ENCODE measurements at regions of chr1 and their contacts with region 1.

Region 1: DNA sequence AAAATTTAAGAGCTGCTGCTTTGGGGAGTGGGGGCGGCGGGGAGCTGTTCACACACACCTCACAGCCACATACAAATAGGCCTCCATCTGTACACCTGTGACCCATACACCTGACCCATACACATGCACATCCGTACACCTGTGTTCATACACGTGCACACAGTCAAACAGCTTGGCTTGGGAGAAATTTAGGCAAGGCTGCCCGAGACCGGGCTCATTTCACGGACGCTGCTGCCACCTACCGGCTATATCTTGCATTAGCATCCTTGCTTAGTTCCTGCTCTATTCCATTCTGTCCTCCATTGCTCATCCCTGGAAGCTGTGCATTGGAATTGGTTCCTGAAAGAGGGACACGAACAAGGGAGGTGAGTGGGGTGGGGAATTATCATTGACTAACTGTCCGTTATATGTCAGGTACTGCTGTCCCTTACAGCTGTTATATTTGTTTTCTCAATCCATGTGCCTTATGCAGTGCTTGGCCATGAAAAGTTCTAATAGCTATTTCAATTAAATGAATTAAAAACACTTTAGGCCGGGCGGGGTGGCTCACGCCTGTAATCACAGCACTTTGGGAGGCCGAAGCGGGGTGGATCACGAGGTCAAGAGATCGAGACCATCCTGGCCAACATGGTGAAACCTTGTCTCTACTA is 37.1 kb upstream of the EPB41 start:
- DNase-seq: peak; percentile 88
- H3K4me3 Mint-ChIP-seq: no peak overlapping the region
- H3K27ac Mint-ChIP-seq: no peak overlapping the region
- H3K4me1 Mint-ChIP-seq: peaks cover 9% of the 10 kb centered on the region
- H3K27me3 Mint-ChIP-seq: no peaks in the 10 kb centered on the region

Region 2: DNA sequence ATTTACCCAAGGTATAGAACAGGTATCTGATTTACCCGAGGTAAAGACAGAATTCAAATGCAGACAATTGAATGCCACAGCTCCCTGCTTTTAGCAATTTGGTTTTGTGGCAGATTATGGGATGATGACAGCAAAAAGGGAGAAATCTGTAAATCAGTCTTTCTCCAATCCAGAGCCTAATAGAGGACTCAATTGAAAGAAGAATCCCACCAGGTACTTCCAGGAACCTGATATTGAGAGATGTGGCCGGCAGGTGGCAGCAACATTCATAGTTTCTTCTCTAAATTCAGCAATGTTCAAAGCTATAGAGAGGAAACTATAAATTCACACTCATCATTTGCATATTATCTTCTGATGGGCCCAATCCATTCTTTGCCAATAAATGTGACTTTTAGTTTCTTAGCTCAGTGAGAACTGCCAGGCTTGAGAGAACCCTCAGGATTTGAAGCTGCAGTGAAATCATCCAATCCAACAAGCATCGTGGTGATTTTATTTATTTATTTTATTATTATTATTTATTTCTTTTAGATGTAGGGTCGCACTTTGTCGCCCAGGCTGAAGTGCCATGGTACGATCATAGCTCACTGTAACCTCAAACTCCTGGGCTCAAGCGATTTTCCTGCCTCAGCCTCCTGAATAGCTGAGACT is 517.5 kb before region 1 on chr1:
- CTCF ChIA-PET with region 1: interaction called, 23 read pairs
- intact Hi-C with region 1: loop called (anchors 1 kb)
- DNase-seq: peak; percentile 90
- H3K4me3 Mint-ChIP-seq: no peak overlapping the region
- H3K27ac Mint-ChIP-seq: no peak overlapping the region
- H3K4me1 Mint-ChIP-seq: peaks cover 2% of the 10 kb centered on the region
- H3K27me3 Mint-ChIP-seq: no peaks in the 10 kb centered on the region

Region 3: GRCh38 chr1:28518000-28518744 is 359.1 kb before region 1 on chr1:
- CTCF ChIA-PET with region 1: interaction called, 10 read pairs
- intact Hi-C with region 1: loop called (anchors 1 kb)
- DNase-seq: peak; percentile 92
- H3K4me3 Mint-ChIP-seq: peak overlapping the region; percentile 90
- H3K27ac Mint-ChIP-seq: peak overlapping the region; percentile 91
- H3K4me1 Mint-ChIP-seq: peaks cover 38% of the 10 kb centered on the region
- H3K27me3 Mint-ChIP-seq: no peaks in the 10 kb centered on the region

Region 4: GRCh38 chr1:28775121-28775944 is 101.9 kb before region 1 on chr1:
- CTCF ChIA-PET with region 1: interaction called, 18 read pairs
- intact Hi-C with region 1: no loop called
- DNase-seq: peak; percentile 72
- H3K4me3 Mint-ChIP-seq: peak overlapping the region; percentile 71
- H3K27ac Mint-ChIP-seq: peak overlapping the region; percentile 69
- H3K4me1 Mint-ChIP-seq: peaks cover 7% of the 10 kb centered on the region
- H3K27me3 Mint-ChIP-seq: no peaks in the 10 kb centered on the region

Region 5: DNA sequence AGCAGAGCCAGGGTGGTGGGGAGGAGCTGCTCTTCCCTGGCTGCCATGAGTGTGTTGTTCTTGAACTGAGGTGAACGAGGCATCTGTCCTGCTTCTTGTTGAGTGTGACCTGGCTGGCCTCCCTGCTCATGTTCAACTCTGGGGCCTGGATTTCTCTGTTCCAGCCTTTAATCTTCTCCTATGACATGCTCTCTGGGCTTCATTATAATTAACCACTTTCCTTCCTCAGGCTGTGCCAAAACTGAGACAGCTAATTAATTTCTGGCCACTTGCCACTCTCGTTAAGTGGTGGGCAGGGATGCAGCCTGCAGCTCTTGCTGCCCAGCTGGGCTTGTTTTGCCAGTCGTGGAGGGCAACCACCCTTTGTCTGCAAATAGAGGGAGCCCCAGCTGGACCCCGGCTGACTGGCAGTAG is 42.0 kb before region 1 on chr1:
- CTCF ChIA-PET with region 1: interaction called, 10 read pairs
- intact Hi-C with region 1: no loop called
- DNase-seq: no peak
- H3K4me3 Mint-ChIP-seq: no peak overlapping the region
- H3K27ac Mint-ChIP-seq: no peak overlapping the region
- H3K4me1 Mint-ChIP-seq: no peaks in the 10 kb centered on the region
- H3K27me3 Mint-ChIP-seq: no peaks in the 10 kb centered on the region

Region 6: DNA sequence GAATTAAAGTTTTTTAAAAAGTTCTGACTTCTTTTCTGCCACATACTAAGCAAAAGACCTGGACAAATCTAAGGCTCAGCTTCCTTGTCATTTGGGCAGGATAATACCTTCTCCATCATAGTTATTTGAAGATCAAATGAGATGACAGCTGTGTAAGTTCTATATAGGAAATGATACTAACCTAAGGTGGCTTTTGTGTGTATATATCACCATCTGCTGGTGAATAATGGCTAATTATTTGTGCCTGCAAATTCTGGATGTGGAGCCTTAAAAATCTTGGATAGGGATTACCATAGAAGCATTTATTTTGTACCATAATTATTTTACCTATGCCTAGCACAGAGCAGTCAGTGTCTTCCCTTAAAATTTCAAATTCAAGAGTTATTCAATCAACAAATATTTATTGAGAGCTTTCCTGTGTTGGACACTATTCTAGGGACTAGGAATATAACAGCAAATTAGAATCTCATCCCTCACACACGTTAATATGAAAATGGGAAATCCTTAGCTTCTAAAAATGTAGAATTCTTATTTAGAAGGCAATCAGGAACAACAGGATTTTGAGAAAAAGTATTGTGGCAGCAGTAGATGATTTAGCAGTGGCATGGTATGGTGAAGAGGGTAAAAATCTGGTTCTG is 156.7 kb after region 1 on chr1:
- CTCF ChIA-PET with region 1: interaction called, 277 read pairs
- intact Hi-C with region 1: loop called (anchors 1 kb)
- DNase-seq: no peak
- H3K4me3 Mint-ChIP-seq: no peak overlapping the region
- H3K27ac Mint-ChIP-seq: no peak overlapping the region
- H3K4me1 Mint-ChIP-seq: no peaks in the 10 kb centered on the region
- H3K27me3 Mint-ChIP-seq: no peaks in the 10 kb centered on the region

Region 7: GRCh38 chr1:30135698-30136097 is 1258.4 kb after region 1 on chr1:
- CTCF ChIA-PET with region 1: no interaction called
- intact Hi-C with region 1: no loop called
- DNase-seq: no peak
- H3K4me3 Mint-ChIP-seq: no peak overlapping the region
- H3K27ac Mint-ChIP-seq: no peak overlapping the region
- H3K4me1 Mint-ChIP-seq: no peaks in the 10 kb centered on the region
- H3K27me3 Mint-ChIP-seq: no peaks in the 10 kb centered on the region